Head of caudate nucleus (tissue), 42 donors: ENCODE measurements at regions of chr5 and their contacts with region 1.

Region 1: DNA sequence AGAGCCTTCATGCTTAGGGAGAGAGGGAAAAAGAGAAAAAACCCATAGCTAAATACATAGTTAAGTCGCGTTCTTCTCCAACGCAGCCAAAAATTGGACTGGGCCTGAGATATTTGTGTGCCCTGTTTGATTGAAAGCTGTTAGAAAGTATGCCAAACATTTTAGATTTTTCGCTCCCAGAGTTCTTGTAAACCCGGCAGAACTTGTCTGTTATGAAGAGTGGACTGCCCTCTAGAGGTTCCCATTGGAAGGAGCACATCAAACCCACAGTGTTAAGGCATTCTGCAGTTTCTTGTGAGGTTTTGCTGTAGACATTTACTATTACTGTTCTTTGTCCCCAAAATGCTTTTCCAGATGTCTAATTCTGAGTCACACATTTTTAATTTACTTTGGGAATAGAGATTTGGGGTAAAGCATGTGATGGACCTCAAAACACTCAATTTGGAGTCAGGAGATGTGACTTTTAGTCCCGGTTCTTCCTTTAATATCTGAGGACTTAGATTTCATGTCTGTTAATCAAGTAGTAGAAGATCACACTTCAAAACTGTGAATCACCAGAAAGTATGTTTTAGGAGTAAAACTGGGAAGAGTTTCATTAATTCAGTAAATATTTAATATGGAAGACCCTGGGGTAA is 96.6 kb downstream of the PCSK1 start:
- DNase-seq: peak in 39 of 42 donors; percentile 17 to 91 (median 76)

Region 2: GRCh38 chr5:95961617-95962474 is 374.6 kb before region 1 on chr5 and contains the start of gene ELL2:
- intact Hi-C with region 1: loop called (anchors 5 kb)
- DNase-seq: peak; percentile 88 to 98 (median 96)